ENCODE measurements at regions of chr17 and their contacts with region 1.

Region 1: GRCh38 chr17:7435221-7435675 is at the start of gene TMEM102:
- DNase-seq: peak; percentile 99
- H3K4me3 Mint-ChIP-seq: peak within 1 kb of the TSS; percentile 94
- H3K27ac Mint-ChIP-seq: peak within 1 kb of the TSS; percentile 97
- H3K4me1 Mint-ChIP-seq: peaks cover 44% of the 10 kb centered on the region
- H3K27me3 Mint-ChIP-seq: peaks cover 27% of the 10 kb centered on the region

Region 2: DNA sequence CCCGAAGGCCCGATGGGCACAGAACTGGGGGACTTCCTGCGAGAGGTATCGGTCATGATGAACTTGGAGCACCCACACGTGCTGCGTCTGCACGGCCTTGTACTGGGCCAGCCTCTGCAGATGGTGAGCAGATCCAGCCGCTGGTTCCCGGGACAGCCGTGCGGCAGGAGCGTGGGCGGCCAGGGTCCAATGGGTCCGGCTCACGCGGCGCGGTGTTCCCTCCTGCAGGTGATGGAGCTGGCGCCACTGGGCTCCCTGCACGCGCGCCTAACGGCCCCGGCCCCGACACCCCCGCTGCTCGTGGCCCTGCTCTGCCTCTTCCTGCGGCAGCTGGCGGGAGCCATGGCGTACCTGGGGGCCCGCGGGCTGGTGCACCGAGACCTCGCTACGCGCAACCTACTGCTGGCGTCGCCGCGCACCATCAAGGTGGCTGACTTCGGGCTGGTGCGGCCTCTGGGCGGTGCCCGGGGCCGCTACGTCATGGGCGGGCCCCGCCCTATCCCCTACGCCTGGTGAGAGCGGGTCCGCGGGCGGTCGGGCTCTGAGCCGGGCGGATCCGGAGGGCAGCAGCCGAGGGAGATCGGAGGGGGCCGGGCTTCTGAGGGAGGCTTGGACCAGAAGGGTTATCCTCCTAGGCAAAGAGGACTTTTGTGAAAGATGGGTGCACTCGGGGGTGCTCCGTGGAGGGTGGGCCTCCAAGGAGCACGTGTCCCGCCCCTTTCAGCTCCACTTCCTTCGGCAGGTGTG is 51.3 kb before region 1 on chr17:
- CTCF ChIA-PET with region 1: no interaction called
- DNase-seq: peak; percentile 87
- H3K4me3 Mint-ChIP-seq: peak overlapping the region; percentile 74
- H3K27ac Mint-ChIP-seq: peak overlapping the region; percentile 49
- H3K4me1 Mint-ChIP-seq: peaks cover 25% of the 10 kb centered on the region
- H3K27me3 Mint-ChIP-seq: peaks cover 47% of the 10 kb centered on the region

Region 3: GRCh38 chr17:7454980-7455379 is 19.7 kb after region 1 on chr17:
- CTCF ChIA-PET with region 1: interaction called, 10 read pairs
- DNase-seq: no peak
- H3K4me3 Mint-ChIP-seq: peak overlapping the region; percentile 83
- H3K27ac Mint-ChIP-seq: peak overlapping the region; percentile 93
- H3K4me1 Mint-ChIP-seq: peaks cover 43% of the 10 kb centered on the region
- H3K27me3 Mint-ChIP-seq: no peaks in the 10 kb centered on the region

Region 4: DNA sequence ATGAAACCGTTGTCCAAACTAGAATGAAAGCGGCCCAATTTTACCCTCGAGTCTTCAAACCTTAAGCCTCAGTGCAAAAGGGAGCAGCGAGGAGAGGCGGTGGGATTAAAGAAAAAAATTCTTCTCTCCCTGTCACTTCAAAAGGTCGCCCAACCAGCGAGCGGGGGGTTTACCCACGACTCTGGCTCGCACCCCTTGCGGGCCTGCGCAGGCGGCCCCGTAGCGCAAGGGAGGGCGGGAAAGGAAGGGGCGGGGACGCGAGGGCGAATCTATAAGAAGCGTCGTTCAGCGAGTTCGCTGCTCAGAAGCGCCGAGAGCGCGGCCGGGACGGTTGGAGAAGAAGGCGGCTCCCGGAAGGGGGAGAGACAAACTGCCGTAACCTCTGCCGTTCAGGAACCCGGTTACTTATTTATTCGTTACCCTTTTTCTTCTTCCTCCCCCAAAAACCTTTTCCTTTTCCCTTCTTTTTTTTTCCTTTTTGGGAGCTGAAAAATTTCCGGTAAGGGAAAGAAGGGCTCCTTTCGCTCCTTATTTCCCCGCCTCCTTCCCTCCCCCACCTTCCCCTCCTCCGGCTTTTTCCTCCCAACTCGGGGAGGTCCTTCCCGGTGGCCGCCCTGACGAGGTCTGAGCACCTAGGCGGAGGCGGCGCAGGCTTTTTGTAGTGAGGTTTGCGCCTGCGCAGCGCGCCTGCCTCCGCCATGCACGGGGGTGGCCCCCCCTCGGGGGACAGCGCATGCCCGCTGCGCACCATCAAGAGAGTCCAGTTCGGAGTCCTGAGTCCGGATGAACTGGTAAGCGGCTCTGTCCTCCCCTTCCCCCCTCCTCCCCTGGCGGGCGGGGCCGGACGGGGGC is 49.0 kb after region 1 on chr17 and contains the start of gene POLR2A:
- CTCF ChIA-PET with region 1: interaction called, 19 read pairs
- DNase-seq: peak; percentile 96
- H3K4me3 Mint-ChIP-seq: peak within 1 kb of the TSS; percentile 99
- H3K27ac Mint-ChIP-seq: peak within 1 kb of the TSS; percentile 100
- H3K4me1 Mint-ChIP-seq: peaks cover 75% of the 10 kb centered on the region
- H3K27me3 Mint-ChIP-seq: no peaks in the 10 kb centered on the region

Region 5: GRCh38 chr17:8173056-8173870 is 738.0 kb after region 1 on chr17:
- CTCF ChIA-PET with region 1: no interaction called
- DNase-seq: peak; percentile 88
- H3K4me3 Mint-ChIP-seq: peak overlapping the region; percentile 78
- H3K27ac Mint-ChIP-seq: peak overlapping the region; percentile 100
- H3K4me1 Mint-ChIP-seq: peaks cover 61% of the 10 kb centered on the region
- H3K27me3 Mint-ChIP-seq: no peaks in the 10 kb centered on the region